ENCODE measurements at regions of chr10 and their contacts with region 1.

Region 1: DNA sequence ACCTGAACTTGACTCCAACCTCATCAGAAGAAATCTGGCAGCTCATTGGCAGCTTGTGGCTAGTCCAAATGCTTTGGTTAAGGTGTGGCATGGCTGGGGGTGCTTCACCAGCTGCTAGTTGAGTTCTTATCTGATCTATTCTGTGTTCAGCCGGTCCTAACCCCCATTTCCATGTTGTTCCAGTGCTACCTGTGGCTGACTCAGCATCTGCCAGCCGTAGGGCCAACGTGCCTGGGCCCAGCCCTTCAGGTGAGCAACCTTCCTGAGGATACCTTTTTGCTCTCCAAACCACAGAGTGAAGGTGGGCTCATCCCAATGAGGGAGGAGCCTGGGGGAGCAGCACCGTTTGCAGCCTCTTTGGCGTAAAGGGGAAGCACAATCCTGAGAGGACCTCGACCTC is 46.8 kb upstream of the C10orf120 start:
- DNase-seq: no peak
- H3K4me3 ChIP-seq: no peak overlapping the region
- H3K27ac ChIP-seq: no peak overlapping the region
- H3K4me1 ChIP-seq: no peaks in the 10 kb centered on the region
- H3K27me3 ChIP-seq: peaks cover 11% of the 10 kb centered on the region
- CTCF ChIP-seq: no peak
- EP300 ChIP-seq: no peak
- POLR2A ChIP-seq: no peak

Region 2: DNA sequence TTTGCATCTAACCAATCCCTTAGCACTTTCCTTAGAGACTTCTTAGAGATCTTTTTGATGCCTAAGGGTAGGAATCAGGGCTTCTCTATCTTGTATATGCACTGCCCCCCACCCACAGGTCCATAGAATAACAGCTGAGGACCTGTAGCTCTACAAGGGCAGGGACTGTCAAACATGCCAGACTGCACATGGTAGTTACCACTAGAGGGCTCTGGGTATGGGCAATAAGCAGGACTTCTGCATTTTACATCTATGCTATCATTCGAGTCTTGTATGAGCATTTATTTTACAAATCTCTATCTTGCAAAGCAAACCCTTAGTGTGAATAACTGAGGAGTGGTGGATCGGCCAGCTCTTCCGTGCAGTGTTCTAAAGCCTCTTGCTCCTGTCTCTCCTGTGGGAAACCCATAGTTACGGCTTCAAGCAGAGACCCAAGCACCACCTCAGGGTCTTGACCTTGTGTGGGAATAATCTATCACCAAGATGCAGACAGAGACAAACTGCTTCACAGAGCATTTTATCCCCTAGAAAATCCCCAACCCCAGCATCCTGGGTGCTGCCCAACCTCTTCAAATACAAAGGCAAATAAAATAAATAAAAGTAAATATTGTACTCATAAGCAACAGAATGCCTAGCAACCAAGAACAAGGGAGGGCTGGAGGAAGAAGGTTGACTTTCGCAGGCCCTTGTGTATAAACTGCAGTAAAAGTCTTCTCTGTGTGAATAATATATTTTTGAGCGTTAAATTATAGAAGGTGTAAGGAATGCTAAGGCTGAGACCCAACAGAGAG is 1675.9 kb before region 1 on chr10:
- in situ Hi-C with region 1: no loop called
- intact Hi-C with region 1: loop called (anchors 5 kb)
- DNase-seq: peak; percentile 24
- H3K4me3 ChIP-seq: no peak overlapping the region
- H3K27ac ChIP-seq: peak overlapping the region; percentile 67 to 79 (median 71)
- H3K4me1 ChIP-seq: peaks cover 4 to 30% (median 16%) of the 10 kb centered on the region in 4 donors
- H3K27me3 ChIP-seq: no peaks in the 10 kb centered on the region
- CTCF ChIP-seq: peak; percentile 40 to 58 (median 51)
- EP300 ChIP-seq: no peak
- POLR2A ChIP-seq: no peak

Region 3: GRCh38 chr10:122814493-122814892 is 68.1 kb after region 1 on chr10:
- in situ Hi-C with region 1: no loop called
- intact Hi-C with region 1: no loop called
- DNase-seq: no peak
- H3K4me3 ChIP-seq: no peak overlapping the region
- H3K27ac ChIP-seq: no peak overlapping the region
- H3K4me1 ChIP-seq: no peaks in the 10 kb centered on the region
- H3K27me3 ChIP-seq: peaks cover 23% of the 10 kb centered on the region
- CTCF ChIP-seq: no peak
- EP300 ChIP-seq: no peak
- POLR2A ChIP-seq: no peak

Region 4: GRCh38 chr10:124319926-124320401 is 1573.6 kb after region 1 on chr10:
- in situ Hi-C with region 1: no loop called
- intact Hi-C with region 1: no loop called
- DNase-seq: no peak
- H3K4me3 ChIP-seq: no peak overlapping the region
- H3K27ac ChIP-seq: no peak overlapping the region
- H3K4me1 ChIP-seq: no peaks in the 10 kb centered on the region
- H3K27me3 ChIP-seq: no peaks in the 10 kb centered on the region
- CTCF ChIP-seq: no peak
- EP300 ChIP-seq: no peak
- POLR2A ChIP-seq: no peak

Measured in transverse colon (tissue), 4 donors.